ENCODE measurements at regions of chr3 and their contacts with region 1.

Region 1: DNA sequence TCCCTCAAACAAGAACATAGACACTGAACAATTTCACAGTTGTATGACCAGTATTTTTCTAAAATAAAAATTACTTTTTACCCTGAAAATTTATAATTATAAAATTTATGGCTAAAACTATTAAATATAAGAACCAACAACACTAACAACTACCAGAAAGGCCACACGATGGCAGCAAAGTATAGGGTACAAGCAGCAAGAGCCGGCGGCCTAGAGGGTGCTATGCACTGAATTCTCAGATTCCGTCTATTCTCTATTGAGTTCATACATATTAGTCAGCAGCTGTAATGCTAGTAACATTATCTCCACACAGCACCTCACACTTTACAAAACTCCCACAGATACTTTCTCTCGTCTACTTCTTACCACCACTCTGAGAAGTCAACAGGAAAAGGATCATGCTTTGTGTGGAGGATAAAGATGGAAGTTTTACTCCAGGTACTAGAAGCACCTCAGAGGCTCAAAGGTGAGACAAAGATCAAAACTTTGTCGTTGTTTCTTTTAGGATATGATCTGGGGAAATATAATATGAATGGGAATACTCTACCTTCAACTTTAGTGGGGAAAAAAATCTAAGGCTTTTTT is 160.5 kb downstream of the FGF12 start:
- DNase-seq: peak; percentile 61 to 74 (median 69)
- ATAC-seq: peak; percentile 56 to 75 (median 68)
- H3K4me3 ChIP-seq: peak overlapping the region in 2 of 12 donors; percentile 0 to 12
- H3K27ac ChIP-seq: peak overlapping the region in 8 of 12 donors; percentile 4 to 55 (median 48)
- H3K4me1 ChIP-seq: peaks cover 0 to 37% (median 9%) of the 10 kb centered on the region in 12 donors
- H3K27me3 ChIP-seq: no peaks in the 10 kb centered on the region
- CTCF ChIP-seq: peak; percentile 70 to 91 (median 82)
- POLR2A ChIP-seq: no peak

Region 2: GRCh38 chr3:191919491-191920026 is 647.2 kb before region 1 on chr3:
- intact Hi-C with region 1: no loop called
- DNase-seq: no peak
- ATAC-seq: no peak
- H3K4me3 ChIP-seq: no peak overlapping the region
- H3K27ac ChIP-seq: no peak overlapping the region
- H3K4me1 ChIP-seq: no peaks in the 10 kb centered on the region
- H3K27me3 ChIP-seq: no peaks in the 10 kb centered on the region
- CTCF ChIP-seq: no peak
- POLR2A ChIP-seq: no peak

Region 3: GRCh38 chr3:192637803-192638202 is 71.0 kb after region 1 on chr3:
- intact Hi-C with region 1: loop called in 2 of 10 experiments (anchors 2 to 5 kb)
- DNase-seq: no peak
- ATAC-seq: peak in 3 of 4 donors; percentile 34 to 53 (median 45)
- H3K4me3 ChIP-seq: no peak overlapping the region
- H3K27ac ChIP-seq: peak overlapping the region; percentile 75 to 95 (median 87)
- H3K4me1 ChIP-seq: peaks cover 0 to 15% (median 2%) of the 10 kb centered on the region in 12 donors
- H3K27me3 ChIP-seq: no peaks in the 10 kb centered on the region
- CTCF ChIP-seq: no peak
- POLR2A ChIP-seq: no peak

Region 4: DNA sequence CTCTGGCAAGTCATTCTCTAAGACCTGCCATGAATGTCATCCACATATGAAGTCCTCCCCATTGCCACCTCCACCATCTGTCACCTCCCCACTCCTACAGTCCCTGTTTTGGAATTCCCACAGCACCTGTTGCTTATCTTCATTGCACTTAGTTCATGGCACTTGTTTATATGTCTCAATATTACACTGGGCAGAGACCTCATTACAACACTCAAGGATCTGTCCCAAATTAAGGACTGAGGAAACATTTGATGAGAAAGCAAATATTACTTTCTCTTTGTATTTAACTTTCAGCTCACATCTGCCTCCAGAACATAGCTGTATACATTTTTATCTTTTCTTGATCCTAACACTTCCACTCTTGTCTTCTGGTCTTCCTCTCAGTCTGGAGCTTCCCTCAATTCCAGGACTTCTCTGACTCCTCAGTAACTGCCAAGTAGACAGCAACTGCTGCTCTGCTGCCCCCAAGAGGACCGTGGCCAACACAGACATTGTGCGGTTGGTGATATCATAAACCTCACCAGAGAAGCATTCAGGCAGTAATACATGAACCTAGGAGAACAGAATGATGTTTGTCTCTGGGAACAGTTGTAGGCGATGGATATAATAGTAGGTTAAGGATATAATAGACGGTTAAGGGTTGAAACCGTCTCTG is 205.6 kb after region 1 on chr3:
- intact Hi-C with region 1: loop called in 7 of 10 experiments (anchors 1 to 10 kb)
- DNase-seq: peak in 4 of 5 donors; percentile 29 to 54 (median 42)
- ATAC-seq: peak; percentile 75 to 94 (median 90)
- H3K4me3 ChIP-seq: no peak overlapping the region
- H3K27ac ChIP-seq: no peak overlapping the region
- H3K4me1 ChIP-seq: no peaks in the 10 kb centered on the region
- H3K27me3 ChIP-seq: no peaks in the 10 kb centered on the region
- CTCF ChIP-seq: peak in 11 of 12 donors; percentile 24 to 67 (median 49)
- POLR2A ChIP-seq: no peak

Region 5: DNA sequence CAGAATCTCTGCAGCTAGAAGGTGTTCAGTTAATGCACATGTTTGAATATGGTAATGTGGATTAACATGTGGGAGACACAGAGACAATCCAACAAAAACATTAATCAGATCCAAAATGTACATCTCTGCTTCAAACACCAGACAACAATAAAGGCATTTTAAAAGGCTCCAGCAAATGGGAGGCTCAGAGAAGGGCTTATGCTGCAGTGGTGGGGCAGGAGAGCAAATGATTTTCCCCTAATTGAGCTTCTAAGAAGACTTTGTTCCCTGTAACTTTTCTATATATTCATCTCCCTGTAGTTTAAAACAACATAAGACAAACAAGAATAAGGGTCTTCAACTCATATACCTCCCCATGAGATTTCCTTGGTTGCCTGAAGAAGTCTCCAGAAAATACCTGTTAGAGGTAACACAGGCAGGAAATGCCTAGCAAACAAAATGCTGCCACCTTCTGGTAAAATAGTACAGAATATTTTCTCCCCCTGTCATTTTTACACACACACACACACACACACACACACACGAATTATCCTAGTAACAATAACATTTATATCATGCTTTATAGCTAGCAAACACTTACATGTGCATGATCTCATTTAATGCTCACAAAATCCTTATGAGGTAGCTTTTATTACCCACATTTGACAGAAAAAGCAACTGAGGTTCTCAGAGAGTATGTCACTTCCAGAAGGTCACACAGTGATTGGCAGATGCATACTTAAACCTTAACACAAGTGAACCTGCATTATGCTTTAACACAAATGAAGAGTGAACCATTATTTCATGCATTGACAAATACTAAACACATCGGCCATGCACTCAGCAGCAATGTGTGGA is 474.3 kb after region 1 on chr3:
- intact Hi-C with region 1: loop called in 1 of 10 experiments (anchors 2 kb)
- DNase-seq: no peak
- ATAC-seq: peak in 1 of 4 donors; percentile 46
- H3K4me3 ChIP-seq: no peak overlapping the region
- H3K27ac ChIP-seq: no peak overlapping the region
- H3K4me1 ChIP-seq: no peaks in the 10 kb centered on the region
- H3K27me3 ChIP-seq: no peaks in the 10 kb centered on the region
- CTCF ChIP-seq: peak; percentile 31 to 71 (median 57)
- POLR2A ChIP-seq: no peak

Region 6: DNA sequence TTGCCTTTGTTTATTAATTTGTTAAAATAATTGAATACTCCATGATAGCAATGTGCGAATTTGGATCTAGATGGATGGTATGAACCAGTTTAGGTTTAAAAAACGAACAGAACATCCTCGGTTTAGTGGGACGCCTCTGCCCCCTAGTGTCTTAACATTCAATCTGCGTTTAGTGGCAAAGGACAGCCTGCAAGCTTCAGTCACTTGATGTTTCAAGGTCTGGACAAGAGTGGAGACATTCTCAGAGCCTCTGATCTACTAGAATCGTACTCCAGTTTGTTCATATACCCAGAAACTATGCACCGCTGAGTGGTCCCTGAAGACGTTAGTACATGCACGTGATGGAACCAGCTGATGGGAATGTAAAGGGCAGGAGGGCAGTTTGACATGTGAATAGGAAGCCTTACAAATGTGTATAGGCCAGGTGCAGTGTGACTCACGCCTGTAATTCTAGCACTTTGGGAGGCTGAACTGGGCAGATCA is 1005.7 kb after region 1 on chr3:
- intact Hi-C with region 1: loop called in 8 of 10 experiments (anchors 5 to 10 kb)
- DNase-seq: peak in 4 of 5 donors; percentile 37 to 48 (median 42)
- ATAC-seq: peak; percentile 37 to 79 (median 70)
- H3K4me3 ChIP-seq: no peak overlapping the region
- H3K27ac ChIP-seq: no peak overlapping the region
- H3K4me1 ChIP-seq: no peaks in the 10 kb centered on the region
- H3K27me3 ChIP-seq: no peaks in the 10 kb centered on the region
- CTCF ChIP-seq: peak; percentile 56 to 87 (median 74)
- POLR2A ChIP-seq: no peak

Measured in heart left ventricle (tissue), 16 donors.